Psoas muscle (tissue), 8 donors: ENCODE measurements at regions of chr18 and their contacts with region 1.

Region 1: DNA sequence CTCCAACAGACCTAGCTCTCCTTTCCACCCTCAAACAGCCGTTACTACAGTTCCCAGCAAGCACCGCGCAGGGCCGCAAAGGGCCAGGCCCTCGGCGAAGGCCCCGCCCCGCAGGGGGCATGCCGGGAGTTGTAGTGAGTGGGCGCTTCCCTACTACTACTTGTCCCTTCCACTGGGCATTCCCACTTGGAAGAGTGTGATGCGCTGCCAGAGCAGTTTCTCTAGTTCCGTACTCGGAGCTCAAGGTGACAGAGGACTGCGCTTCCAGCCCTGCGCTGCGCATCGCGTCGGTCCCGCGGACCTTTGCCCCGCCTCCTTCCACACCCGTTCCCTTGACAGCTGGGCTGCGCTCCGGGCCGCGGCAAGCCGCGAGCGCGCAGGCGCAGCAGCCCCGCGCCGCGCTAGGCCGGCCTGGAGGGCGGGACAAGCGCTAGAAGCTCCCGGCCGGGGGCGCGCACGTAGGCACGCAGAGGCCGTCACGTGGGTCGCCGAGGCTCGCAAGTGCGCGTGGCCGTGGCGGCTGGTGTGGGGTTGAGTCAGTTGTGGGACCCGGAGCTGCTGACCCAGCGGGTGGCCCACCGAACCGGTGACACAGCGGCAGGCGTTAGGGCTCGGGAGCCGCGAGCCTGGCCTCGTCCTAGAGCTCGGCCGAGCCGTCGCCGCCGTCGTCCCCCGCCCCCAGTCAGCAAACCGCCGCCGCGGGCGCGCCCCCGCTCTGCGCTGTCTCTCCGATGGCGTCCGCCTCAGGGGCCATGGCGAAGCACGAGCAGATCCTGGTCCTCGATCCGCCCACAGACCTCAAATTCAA is at the start of gene VAPA:
- DNase-seq: peak; percentile 97
- ATAC-seq: peak; percentile 93 to 96 (median 94)
- H3K4me3 ChIP-seq: peak within 1 kb of the TSS; percentile 93
- H3K27ac ChIP-seq: peak within 1 kb of the TSS; percentile 99
- H3K4me1 ChIP-seq: peaks cover 37% of the 10 kb centered on the region
- H3K27me3 ChIP-seq: no peaks in the 10 kb centered on the region
- CTCF ChIP-seq: no peak
- total RNA-seq, gene VAPA: 168 to 259 (median 235) TPM

Region 2: DNA sequence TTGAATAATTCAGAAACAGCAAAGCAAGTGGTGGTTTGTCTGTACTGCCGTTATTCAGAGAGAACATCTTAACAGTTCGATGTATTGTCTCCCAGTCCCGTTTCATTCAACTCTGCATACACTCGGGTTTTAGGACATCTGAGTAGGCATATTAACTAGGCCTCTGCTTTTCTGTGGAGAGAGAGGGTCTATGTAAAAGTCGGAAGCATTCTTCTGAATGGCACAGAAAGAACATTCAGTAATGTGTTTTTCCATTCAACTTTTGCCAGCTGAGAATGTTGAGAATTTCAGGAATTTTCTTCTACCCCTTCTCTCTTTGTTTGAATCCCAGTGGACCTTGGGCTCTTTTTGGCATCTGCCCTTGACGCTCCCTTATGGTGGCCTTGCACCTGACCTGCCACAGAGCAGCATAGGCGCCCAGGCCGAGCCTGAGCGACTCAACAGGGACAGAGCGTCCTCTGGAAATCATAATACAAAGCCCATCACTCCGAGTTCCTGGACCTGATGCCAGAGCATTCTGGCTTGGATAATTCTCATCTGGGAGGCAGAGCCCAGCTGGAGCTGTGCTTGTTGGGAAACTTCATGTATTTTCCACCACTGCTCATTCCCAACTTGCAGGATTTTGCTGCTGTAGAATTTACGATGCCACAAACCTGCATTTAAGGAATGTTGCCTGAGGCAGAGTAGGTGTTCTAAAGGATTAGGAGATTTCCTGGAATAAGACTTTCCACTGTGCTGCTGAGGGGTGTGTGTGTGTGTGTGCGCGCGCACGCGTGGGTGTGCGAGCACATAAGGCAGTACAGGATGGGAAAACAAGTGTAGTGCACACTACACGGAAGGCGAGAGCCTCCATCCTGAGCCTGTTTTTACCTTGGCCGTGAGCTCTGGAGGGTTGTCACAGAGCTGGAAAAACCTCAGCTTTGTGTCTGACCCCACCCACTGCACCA is 105.2 kb before region 1 on chr18:
- intact Hi-C with region 1: loop called in 1 of 2 experiments (anchors 10 kb)
- DNase-seq: peak in 1 of 2 donors; percentile 59
- ATAC-seq: peak in 3 of 4 donors; percentile 16 to 25 (median 20)
- H3K4me3 ChIP-seq: no peak overlapping the region
- H3K27ac ChIP-seq: no peak overlapping the region
- H3K4me1 ChIP-seq: peaks cover 38% of the 10 kb centered on the region
- H3K27me3 ChIP-seq: no peaks in the 10 kb centered on the region
- CTCF ChIP-seq: no peak

Region 3: DNA sequence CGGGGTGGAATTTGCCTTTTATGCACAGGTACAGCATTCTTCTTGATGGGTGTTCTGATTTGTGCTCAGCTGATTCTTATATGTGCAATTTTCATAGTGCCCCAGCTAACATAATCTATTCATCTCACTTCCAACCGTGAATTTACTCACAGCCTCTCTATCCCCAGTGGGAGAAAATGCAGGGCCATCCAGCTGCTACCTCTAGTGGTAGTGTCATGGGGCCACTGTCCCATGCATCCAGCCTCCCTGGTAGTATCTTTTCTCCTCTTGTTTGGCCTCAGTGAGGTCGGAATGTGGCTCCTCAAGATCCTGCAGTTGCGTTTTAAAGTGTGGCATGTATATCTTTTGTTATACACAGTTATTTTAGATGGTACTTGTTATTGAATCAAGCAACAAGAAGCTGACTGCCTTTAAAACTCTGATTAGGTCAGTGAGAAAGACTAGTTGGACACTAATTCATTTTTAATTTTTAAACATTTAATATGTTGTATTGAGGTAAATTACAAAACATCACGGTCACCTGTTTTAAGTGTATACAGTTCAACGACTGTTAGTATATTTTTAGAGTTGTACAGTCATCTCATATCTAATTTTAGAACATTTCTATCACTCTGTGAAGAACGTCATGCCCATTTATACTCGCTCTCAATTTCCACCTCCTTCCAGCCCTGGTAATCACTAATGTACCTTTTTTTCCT is 95.9 kb before region 1 on chr18:
- intact Hi-C with region 1: loop called in 1 of 2 experiments (anchors 2 kb)
- DNase-seq: no peak
- ATAC-seq: peak; percentile 93 to 99 (median 98)
- H3K4me3 ChIP-seq: no peak overlapping the region
- H3K27ac ChIP-seq: peak overlapping the region; percentile 85
- H3K4me1 ChIP-seq: peaks cover 18% of the 10 kb centered on the region
- H3K27me3 ChIP-seq: no peaks in the 10 kb centered on the region
- CTCF ChIP-seq: no peak

Region 4: GRCh38 chr18:9849407-9850281 is 64.1 kb before region 1 on chr18:
- intact Hi-C with region 1: loop called (anchors 2 to 5 kb)
- DNase-seq: peak; percentile 72 to 90
- ATAC-seq: peak; percentile 97 to 100 (median 98)
- H3K4me3 ChIP-seq: peak overlapping the region; percentile 55
- H3K27ac ChIP-seq: peak overlapping the region; percentile 93
- H3K4me1 ChIP-seq: peaks cover 36% of the 10 kb centered on the region
- H3K27me3 ChIP-seq: no peaks in the 10 kb centered on the region
- CTCF ChIP-seq: no peak

Region 5: DNA sequence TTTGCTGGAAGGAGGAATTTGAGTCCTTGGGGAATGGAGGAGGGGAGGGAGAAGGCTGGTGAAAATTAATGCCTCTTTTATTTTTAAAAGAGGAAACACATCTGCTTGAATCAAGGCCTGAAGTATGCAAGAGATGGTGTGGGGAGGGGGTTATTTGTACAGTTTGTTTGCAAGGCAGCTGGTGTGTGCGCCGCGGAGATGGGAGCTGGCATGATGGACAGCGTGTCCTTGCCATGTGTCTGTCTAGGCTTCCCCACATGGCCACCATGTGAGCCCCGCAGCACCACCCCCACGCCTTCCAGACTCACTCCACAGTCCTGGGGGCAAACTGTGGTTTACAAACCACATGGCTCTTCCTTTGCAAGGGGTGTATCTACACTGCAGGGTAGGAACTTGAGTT is 385.9 kb after region 1 on chr18:
- intact Hi-C with region 1: no loop called
- DNase-seq: no peak
- ATAC-seq: no peak
- H3K4me3 ChIP-seq: no peak overlapping the region
- H3K27ac ChIP-seq: no peak overlapping the region
- H3K4me1 ChIP-seq: no peaks in the 10 kb centered on the region
- H3K27me3 ChIP-seq: peaks cover 0 to 4% (median 0%) of the 10 kb centered on the region in 3 donors
- CTCF ChIP-seq: no peak